ENCODE measurements at regions of chr9 and their contacts with region 1.

Region 1: GRCh38 chr9:128863647-128864046 is 18.1 kb downstream of the KYAT1 start:
- DNase-seq: peak; percentile 77
- H3K4me3 ChIP-seq: no peak overlapping the region
- H3K27ac ChIP-seq: no peak overlapping the region
- H3K4me1 ChIP-seq: no peaks in the 10 kb centered on the region
- H3K27me3 ChIP-seq: no peaks in the 10 kb centered on the region
- CTCF ChIP-seq: peak; percentile 94

Region 2: DNA sequence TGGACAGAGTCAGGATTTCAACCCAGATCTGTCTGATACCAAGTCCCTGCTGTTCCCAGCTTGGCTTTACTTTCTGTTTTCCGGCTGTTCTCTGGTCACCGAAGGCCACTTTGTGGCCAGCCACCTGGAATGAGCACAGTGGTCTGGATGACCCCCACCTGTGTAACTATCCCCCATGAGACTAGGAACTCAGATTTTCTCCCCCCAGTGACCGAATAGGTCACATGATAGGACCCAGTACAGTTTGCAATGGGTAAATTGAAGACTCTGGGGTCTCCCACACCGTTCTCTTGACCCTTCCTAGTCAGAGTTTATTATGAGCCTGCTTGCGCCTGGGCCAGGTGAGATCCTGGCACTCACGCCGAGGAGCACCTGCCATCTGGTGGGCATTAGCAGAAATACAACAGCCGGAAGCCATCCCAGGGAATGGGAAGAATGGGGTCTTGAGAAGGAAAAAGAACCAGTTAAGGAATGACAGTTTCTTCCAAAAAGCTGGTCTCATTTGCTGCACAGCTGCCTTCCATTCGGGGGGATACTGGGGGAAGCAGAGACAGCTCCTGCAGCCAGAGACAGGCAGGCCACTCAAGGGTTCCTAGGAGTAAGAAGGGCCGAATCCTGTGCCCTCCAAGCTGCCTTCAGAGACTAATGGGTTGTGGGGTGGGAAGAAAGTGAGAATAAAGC is 64.2 kb after region 1 on chr9:
- intact Hi-C with region 1: loop called (anchors 2 kb)
- DNase-seq: peak; percentile 53
- H3K4me3 ChIP-seq: no peak overlapping the region
- H3K27ac ChIP-seq: no peak overlapping the region
- H3K4me1 ChIP-seq: no peaks in the 10 kb centered on the region
- H3K27me3 ChIP-seq: no peaks in the 10 kb centered on the region
- CTCF ChIP-seq: peak; percentile 82

Measured in colonic mucosa (tissue), 4 donors.